ENCODE measurements at regions of chr9 and their contacts with region 1.

Region 1: GRCh38 chr9:129139993-129140396 is 28.8 kb downstream of the PTPA start:
- DNase-seq: peak; percentile 99
- H3K27ac ChIP-seq: peak overlapping the region; percentile 100
- CTCF ChIP-seq: no peak

Region 2: DNA sequence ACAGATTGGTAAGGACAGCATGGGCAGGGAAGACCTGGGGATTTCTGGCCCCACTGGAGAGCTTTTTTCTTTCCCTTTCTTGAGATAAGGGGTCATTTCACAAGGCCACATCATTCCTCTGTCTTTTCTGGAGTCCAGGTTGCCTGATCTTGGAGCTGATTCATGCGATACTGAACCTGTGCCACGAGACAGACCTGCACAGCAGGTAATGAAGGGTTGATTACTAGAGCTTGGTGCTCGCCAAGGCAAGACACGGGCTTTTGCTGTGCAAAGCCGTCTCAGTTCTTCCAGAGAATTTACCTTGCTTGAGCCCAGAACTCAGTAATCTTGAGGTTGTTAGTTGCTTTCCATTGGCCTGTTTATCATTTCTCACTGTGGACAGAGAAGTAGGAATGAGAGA is 153.3 kb before region 1 on chr9:
- CTCF ChIA-PET with region 1: no interaction called
- POLR2A ChIA-PET with region 1: no interaction called
- DNase-seq: no peak
- H3K27ac ChIP-seq: no peak overlapping the region
- CTCF ChIP-seq: no peak

Region 3: DNA sequence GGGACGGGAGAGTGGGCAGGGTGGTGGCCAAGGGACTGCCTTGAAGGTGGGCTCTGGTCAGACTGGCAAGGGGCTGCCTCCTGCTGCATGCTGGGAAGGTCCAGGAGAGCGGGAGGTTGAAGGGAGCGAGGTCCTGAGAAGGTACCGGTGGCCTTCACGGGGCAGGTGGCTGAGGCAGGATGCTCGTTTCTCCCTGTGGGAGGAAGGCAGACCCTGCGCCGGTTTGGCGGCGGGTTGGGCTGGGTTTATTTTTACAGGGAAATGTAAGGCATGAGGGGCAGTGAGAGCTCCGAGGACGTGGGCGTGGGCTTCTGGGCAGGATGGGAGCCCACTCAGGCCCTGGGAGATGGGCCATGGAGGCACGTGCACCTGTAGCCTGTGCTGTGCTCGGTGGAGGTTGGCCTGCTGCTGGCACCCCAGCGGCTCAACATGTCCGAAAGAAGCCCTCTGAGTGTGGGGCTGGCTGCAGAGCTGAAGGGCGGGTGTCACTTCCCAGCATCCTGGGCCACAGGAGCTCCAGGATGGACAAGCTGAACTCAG is 10.7 kb after region 1 on chr9:
- CTCF ChIA-PET with region 1: interaction called, 11 read pairs
- POLR2A ChIA-PET with region 1: no interaction called
- DNase-seq: no peak
- H3K27ac ChIP-seq: peak overlapping the region; percentile 17; the same call in 1 of the 2 replicates
- CTCF ChIP-seq: no peak

Region 4: GRCh38 chr9:129166623-129167557 is 26.9 kb after region 1 on chr9:
- CTCF ChIA-PET with region 1: interaction called, 63 read pairs
- POLR2A ChIA-PET with region 1: interaction called, 7 read pairs
- DNase-seq: peak; percentile 100
- H3K27ac ChIP-seq: peak overlapping the region; percentile 90
- CTCF ChIP-seq: no peak

Region 5: GRCh38 chr9:129333953-129334724 is 194.1 kb after region 1 on chr9:
- CTCF ChIA-PET with region 1: interaction called, 7 read pairs
- POLR2A ChIA-PET with region 1: interaction called, 11 read pairs
- DNase-seq: peak; percentile 99
- H3K27ac ChIP-seq: peak overlapping the region; percentile 100
- CTCF ChIP-seq: no peak

Region 6: DNA sequence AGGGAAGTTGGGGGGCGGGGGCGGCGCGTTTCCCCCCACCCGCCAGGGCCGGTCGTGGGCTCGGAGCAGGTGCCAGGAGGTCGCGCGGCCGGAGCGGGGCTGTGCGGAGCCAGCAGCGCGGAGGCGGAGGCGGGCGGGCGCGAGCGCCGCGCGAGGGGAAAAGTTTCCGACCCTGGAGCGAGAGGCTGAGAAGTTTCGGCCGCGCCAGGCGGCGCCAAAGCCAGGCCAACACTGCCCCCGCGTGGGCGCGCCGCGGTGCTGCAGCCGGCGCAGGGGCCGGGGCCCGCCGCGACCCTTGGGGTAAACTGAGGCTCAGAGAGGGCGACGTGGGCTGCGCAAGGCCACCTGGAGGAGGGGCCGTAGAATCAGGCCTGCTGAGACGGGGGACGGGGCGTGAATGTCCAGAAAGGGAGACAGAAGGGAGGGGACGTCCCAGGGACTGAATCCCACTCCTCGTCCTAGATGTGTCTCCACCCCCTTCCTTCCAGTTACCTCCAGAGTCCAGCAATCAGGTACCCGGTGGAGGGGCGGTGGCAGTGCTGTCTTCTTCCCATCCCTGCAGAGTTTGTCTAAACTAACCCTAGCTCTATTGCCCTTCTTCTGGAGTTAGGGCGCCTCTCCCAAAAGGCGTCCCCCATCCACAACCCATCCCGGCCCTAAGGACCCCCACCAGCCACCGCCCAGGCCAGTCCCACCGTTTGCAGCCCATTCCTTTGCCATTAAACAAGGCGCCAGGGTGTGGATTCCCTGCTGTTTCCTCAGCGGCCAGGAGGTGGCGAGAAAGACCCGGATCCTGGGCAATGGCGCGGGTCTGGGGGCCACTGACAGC is 470.7 kb after region 1 on chr9:
- CTCF ChIA-PET with region 1: interaction called, 16 read pairs
- POLR2A ChIA-PET with region 1: interaction called, 3 read pairs
- DNase-seq: peak; percentile 88
- H3K27ac ChIP-seq: peak overlapping the region; percentile 83
- CTCF ChIP-seq: peak; percentile 99

Region 7: GRCh38 chr9:129626079-129626624 is 486.2 kb after region 1 on chr9 and contains the start of gene NTMT1:
- CTCF ChIA-PET with region 1: interaction called, 21 read pairs
- POLR2A ChIA-PET with region 1: no interaction called
- DNase-seq: peak; percentile 94
- H3K27ac ChIP-seq: peak within 1 kb of the TSS; percentile 80
- CTCF ChIP-seq: no peak

Measured in RWPE1 (cell line).